Activated CD8-positive, alpha-beta T cell treated with anti-CD3 and anti-CD28 coated beads for 36 hours (primary cell): ENCODE measurements at regions of chr1 and their contacts with region 1.

Region 1: DNA sequence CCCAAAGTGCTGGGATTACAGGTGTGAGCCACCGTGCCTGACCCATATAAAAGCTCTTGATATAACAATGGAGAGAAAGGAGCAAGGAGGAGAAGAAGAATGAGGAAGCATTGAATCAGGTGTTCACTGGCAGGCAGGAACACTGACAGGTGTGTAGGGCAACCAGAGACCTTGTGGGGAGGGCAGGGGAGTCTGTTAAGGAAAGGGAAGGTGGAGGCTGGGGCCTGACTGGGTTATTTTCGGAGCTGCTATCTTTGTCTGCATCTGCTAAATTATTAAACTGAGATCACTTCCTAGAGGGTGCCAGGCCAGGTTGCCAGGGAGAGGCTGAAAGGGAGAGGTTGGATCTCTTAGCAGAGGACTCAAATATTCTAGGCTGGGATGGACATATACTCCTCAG is 6.8 kb upstream of the TRNP1 start:
- DNase-seq: no peak
- ATAC-seq: no peak
- H3K4me3 Mint-ChIP-seq: no peak overlapping the region
- H3K27ac Mint-ChIP-seq: no peak overlapping the region
- H3K4me1 Mint-ChIP-seq: peaks cover 7% of the 10 kb centered on the region
- H3K27me3 Mint-ChIP-seq: peaks cover 29% of the 10 kb centered on the region
- CTCF ChIP-seq: no peak

Region 2: GRCh38 chr1:26744075-26744959 is 242.3 kb before region 1 on chr1:
- CTCF ChIA-PET with region 1: no interaction called
- POLR2A ChIA-PET with region 1: no interaction called
- intact Hi-C with region 1: no loop called
- DNase-seq: peak; percentile 92
- ATAC-seq: peak; percentile 95
- H3K4me3 Mint-ChIP-seq: peak overlapping the region; percentile 58
- H3K27ac Mint-ChIP-seq: peak overlapping the region; percentile 86
- H3K4me1 Mint-ChIP-seq: peaks cover 83% of the 10 kb centered on the region
- H3K27me3 Mint-ChIP-seq: no peaks in the 10 kb centered on the region
- CTCF ChIP-seq: no peak

Region 3: GRCh38 chr1:26998429-26999300 is 12.0 kb after region 1 on chr1:
- CTCF ChIA-PET with region 1: interaction called, 19 read pairs
- POLR2A ChIA-PET with region 1: interaction called, 4 read pairs
- intact Hi-C with region 1: no loop called
- DNase-seq: no peak
- ATAC-seq: no peak
- H3K4me3 Mint-ChIP-seq: no peak overlapping the region
- H3K27ac Mint-ChIP-seq: no peak overlapping the region
- H3K4me1 Mint-ChIP-seq: peaks cover 7% of the 10 kb centered on the region
- H3K27me3 Mint-ChIP-seq: peaks cover 27% of the 10 kb centered on the region
- CTCF ChIP-seq: no peak